Adrenal gland (tissue), 19 donors: ENCODE measurements at regions of chr6 and their contacts with region 1.

Region 1: GRCh38 chr6:10429638-10430427 is 15.0 kb upstream of the TFAP2A start:
- DNase-seq: no peak
- H3K4me3 ChIP-seq: no peak overlapping the region
- H3K27ac ChIP-seq: no peak overlapping the region
- H3K4me1 ChIP-seq: peaks cover 9 to 14% of the 10 kb centered on the region in 2 donors
- H3K27me3 ChIP-seq: peaks cover 23% of the 10 kb centered on the region
- CTCF ChIP-seq: peak in 5 of 6 experiments; percentile 33 to 65 (median 50)
- POLR2A ChIP-seq: no peak

Region 2: DNA sequence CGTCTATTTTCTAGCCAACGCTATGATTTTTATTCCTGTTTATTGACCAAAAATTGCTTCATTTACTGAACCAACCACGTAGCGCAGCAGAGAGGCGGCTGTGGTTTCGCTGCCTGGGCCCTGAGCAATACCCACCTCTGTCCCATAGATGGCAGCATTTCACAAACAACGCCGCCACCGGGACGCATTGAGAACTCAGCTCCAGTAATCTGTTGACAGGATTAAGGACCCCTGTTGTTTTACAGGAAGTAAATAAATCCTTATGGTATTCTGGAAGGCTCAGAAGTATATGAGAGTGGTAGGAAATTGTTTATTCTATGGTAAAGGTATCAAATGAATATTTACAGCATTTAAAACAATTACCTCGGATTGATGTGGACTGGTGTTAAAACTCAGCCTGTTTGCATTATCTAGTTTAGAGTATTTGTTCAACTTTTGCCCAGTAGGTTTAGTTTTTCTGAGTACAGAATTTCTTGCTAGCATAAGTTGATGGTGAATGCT is 1446.6 kb before region 1 on chr6:
- intact Hi-C with region 1: loop called (anchors 10 kb)
- DNase-seq: peak; percentile 42 to 84 (median 68)
- H3K4me3 ChIP-seq: no peak overlapping the region
- H3K27ac ChIP-seq: no peak overlapping the region
- H3K4me1 ChIP-seq: no peaks in the 10 kb centered on the region
- H3K27me3 ChIP-seq: no peaks in the 10 kb centered on the region
- CTCF ChIP-seq: peak; percentile 86 to 98 (median 90)
- POLR2A ChIP-seq: no peak

Region 3: GRCh38 chr6:9537381-9537780 is 892.5 kb before region 1 on chr6:
- intact Hi-C with region 1: loop called in 1 of 2 experiments (anchors 5 kb)
- DNase-seq: no peak
- H3K4me3 ChIP-seq: no peak overlapping the region
- H3K27ac ChIP-seq: no peak overlapping the region
- H3K4me1 ChIP-seq: no peaks in the 10 kb centered on the region
- H3K27me3 ChIP-seq: no peaks in the 10 kb centered on the region
- CTCF ChIP-seq: no peak
- POLR2A ChIP-seq: no peak